ENCODE measurements at regions of chr5 and their contacts with region 1.

Region 1: GRCh38 chr5:60677844-60678664 is 21.9 kb downstream of the DEPDC1B start:
- DNase-seq: peak; percentile 53
- H3K4me3 Mint-ChIP-seq: no peak overlapping the region
- H3K27ac Mint-ChIP-seq: no peak overlapping the region
- H3K4me1 Mint-ChIP-seq: peaks cover 9% of the 10 kb centered on the region
- H3K27me3 Mint-ChIP-seq: no peaks in the 10 kb centered on the region

Region 2: GRCh38 chr5:60699530-60700382 is 21.7 kb after region 1 on chr5 and contains the start of gene DEPDC1B:
- intact Hi-C with region 1: loop called (anchors 2 kb)
- DNase-seq: peak; percentile 97
- H3K4me3 Mint-ChIP-seq: peak within 1 kb of the TSS; percentile 91
- H3K27ac Mint-ChIP-seq: peak within 1 kb of the TSS; percentile 93
- H3K4me1 Mint-ChIP-seq: peaks cover 28% of the 10 kb centered on the region
- H3K27me3 Mint-ChIP-seq: peaks cover 23% of the 10 kb centered on the region
- total RNA-seq, gene DEPDC1B: 19.8 and 20.5 TPM in 2 replicates

Region 3: DNA sequence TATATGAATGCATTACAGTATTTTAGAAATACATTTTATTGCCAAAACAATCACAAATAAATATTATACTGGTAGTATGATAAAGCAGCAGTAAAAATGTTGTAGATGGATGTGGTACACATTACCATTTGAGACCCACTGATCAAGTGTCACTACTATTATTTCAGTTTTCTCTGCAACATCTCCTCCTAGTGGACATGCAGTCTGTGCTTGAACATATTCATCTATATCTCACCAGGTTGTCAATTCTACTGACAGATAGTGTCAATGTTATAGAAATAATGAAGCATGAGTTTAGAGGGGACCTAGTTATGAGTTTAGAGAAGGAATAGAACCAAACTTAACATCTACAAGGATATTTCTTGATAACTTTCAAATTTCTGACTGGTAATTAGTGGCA is 205.2 kb after region 1 on chr5:
- intact Hi-C with region 1: loop called (anchors 2 kb)
- DNase-seq: no peak
- H3K4me3 Mint-ChIP-seq: no peak overlapping the region
- H3K27ac Mint-ChIP-seq: no peak overlapping the region
- H3K4me1 Mint-ChIP-seq: no peaks in the 10 kb centered on the region
- H3K27me3 Mint-ChIP-seq: no peaks in the 10 kb centered on the region

Region 4: GRCh38 chr5:60929024-60929423 is 251.0 kb after region 1 on chr5:
- intact Hi-C with region 1: loop called (anchors 1 kb)
- DNase-seq: peak; percentile 43
- H3K4me3 Mint-ChIP-seq: no peak overlapping the region
- H3K27ac Mint-ChIP-seq: no peak overlapping the region
- H3K4me1 Mint-ChIP-seq: peaks cover 2% of the 10 kb centered on the region
- H3K27me3 Mint-ChIP-seq: no peaks in the 10 kb centered on the region

Region 5: DNA sequence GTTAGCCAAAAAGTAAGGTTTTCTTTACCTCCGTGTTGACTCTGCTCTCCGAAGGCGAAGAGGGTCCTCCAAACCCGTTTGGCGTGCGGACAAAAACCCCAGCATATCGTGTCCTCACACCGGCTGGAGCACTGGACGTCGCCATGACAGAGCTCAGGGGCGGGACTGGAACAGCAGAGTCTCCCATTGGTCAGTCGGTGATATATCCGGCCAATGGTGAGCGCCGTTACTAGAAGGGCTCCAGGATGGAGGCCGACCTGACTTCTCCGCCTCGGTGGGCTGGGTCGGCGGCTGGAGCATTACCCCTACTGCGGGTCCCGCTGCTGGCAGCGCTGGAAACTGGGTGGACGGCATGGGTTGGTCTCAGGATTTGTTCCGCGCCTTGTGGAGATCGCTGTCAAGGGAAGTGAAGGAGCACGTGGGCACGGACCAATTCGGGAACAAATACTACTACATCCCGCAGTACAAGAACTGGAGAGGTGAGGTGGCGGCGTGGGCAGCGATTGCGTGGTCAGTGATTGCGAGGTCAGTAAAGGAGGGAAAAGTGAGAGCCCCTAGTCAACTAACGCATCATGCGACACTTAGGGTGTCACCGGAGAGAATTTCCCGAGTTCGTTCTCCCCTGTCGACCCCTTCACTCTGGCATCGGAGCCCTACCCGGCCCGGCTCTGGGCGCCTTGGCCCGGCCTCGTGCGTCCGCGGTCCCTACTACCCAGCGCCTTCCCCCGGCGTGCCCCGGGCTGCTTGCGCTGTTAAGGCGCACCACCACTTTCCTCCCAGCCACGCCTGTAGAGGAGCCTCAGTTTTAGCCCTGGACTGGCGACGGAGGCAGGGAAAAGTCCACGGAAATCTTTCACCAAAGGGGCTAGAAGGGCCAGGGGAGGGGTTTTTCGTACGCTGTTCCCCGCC is 267.1 kb after region 1 on chr5 and contains the starts of genes ERCC8 and NDUFAF2:
- intact Hi-C with region 1: loop called (anchors 5 kb)
- DNase-seq: peak; percentile 96
- H3K4me3 Mint-ChIP-seq: no peak within 1 kb of the TSS
- H3K27ac Mint-ChIP-seq: no peak within 1 kb of the TSS
- H3K4me1 Mint-ChIP-seq: peaks cover 16% of the 10 kb centered on the region
- H3K27me3 Mint-ChIP-seq: no peaks in the 10 kb centered on the region
- total RNA-seq, gene ERCC8: 10.7 and 10.8 TPM in 2 replicates
- total RNA-seq, gene NDUFAF2: 38.0 and 39.5 TPM in 2 replicates